ENCODE measurements at regions of chr3 and their contacts with region 1.

Region 1: GRCh38 chr3:184777336-184778004 is 34.5 kb upstream of the VPS8 start:
- DNase-seq: peak; percentile 98
- H3K4me3 ChIP-seq: no peak overlapping the region
- H3K27ac ChIP-seq: no peak overlapping the region
- H3K4me1 ChIP-seq: peaks cover 0 to 16% (median 9%) of the 10 kb centered on the region in 4 donors
- H3K27me3 ChIP-seq: peaks cover 0 to 28% (median 0%) of the 10 kb centered on the region in 4 donors
- CTCF ChIP-seq: peak; percentile 85 to 92 (median 87)
- EP300 ChIP-seq: no peak
- POLR2A ChIP-seq: no peak

Region 2: GRCh38 chr3:184561061-184561912 is 216.2 kb before region 1 on chr3 and contains the start of gene EPHB3:
- intact Hi-C with region 1: loop called (anchors 1 kb)
- DNase-seq: peak; percentile 100
- H3K4me3 ChIP-seq: peak within 1 kb of the TSS; percentile 77 to 82 (median 79)
- H3K27ac ChIP-seq: peak within 1 kb of the TSS; percentile 73 to 89 (median 84)
- H3K4me1 ChIP-seq: peaks cover 18 to 55% (median 52%) of the 10 kb centered on the region in 4 donors
- H3K27me3 ChIP-seq: no peaks in the 10 kb centered on the region
- CTCF ChIP-seq: peak; percentile 98 to 99 (median 98)
- EP300 ChIP-seq: no peak
- POLR2A ChIP-seq: peak; percentile 54
- total RNA-seq, gene EPHB3: 1.5 to 6.1 (median 3.5) TPM

Region 3: GRCh38 chr3:184582646-184583577 is 194.6 kb before region 1 on chr3:
- intact Hi-C with region 1: no loop called
- DNase-seq: no peak
- H3K4me3 ChIP-seq: peak overlapping the region; percentile 66 to 75 (median 72)
- H3K27ac ChIP-seq: peak overlapping the region; percentile 78 to 84 (median 80)
- H3K4me1 ChIP-seq: peaks cover 13 to 35% (median 30%) of the 10 kb centered on the region in 4 donors
- H3K27me3 ChIP-seq: no peaks in the 10 kb centered on the region
- CTCF ChIP-seq: no peak
- EP300 ChIP-seq: no peak
- POLR2A ChIP-seq: no peak

Region 4: DNA sequence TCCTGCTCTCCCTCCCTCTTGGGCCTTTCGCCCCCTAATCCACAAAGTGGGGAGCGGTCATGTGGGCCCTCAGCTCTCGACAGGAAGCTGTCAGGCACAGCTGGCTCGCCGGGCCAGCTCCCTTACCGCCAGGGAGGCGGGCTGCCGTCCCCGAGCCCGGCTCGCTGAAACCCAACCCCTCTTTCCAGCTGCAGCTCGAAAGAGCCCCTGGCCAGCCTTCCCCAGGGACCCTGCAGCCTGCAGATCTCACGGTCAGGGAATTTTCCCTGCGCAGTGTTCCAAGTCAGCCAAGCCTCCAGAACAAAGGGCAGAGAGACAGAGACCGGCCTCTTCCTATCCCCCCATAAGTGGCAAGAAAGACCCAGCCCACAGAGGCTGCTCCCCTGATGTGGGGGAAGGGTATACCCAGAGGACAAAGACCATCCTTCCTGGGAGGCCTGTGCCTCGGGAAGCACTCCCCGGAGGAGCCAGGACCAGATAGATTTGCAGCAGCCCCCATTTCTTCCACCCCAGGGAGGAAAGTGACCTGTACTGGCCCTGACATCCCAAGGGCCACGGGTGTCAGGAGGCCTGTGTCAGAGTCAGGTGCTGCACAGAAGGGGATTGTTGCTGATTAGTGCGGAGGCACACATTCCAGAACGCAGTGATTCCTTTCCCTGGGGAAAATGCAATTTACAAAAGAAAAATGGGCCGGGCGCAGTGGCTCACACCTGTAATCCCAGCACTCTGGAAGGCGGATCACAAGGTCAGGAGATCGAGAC is 98.2 kb before region 1 on chr3:
- intact Hi-C with region 1: no loop called
- DNase-seq: no peak
- H3K4me3 ChIP-seq: peak overlapping the region in 2 of 4 donors; percentile 6 to 12
- H3K27ac ChIP-seq: peak overlapping the region in 1 of 4 donors; percentile 23
- H3K4me1 ChIP-seq: peaks cover 7 to 26% (median 24%) of the 10 kb centered on the region in 4 donors
- H3K27me3 ChIP-seq: no peaks in the 10 kb centered on the region
- CTCF ChIP-seq: no peak
- EP300 ChIP-seq: no peak
- POLR2A ChIP-seq: no peak

Region 5: DNA sequence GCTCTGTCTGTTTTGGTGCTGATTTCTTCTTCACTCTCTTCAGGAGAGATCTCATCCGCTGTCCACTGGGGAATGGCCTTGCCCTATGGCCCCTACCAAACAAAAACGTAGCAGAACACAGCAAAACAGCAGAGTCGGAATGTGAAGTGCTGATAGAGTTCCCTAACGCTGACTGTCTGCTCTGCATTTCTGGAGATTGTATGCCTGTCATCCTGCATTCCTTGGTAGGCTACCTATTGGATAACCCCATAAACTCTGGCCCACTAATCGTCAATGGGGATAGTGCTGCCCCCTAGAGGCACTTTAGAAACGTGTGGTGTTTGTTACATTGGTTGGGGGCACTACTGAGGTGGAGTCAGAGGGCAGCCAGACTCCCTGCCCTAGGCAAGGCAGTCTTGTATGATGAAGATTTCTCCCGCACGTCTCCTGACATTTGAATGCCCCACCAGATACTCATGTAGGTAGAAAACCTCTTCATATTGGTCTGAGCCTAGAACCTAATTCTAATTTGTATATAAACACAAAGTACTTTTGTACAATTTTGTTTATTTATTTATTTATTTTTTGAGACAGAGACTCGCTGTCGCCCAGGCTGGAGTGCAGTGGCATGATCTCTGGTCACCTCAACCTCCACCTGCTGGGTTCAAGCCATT is 50.0 kb before region 1 on chr3:
- intact Hi-C with region 1: loop called (anchors 5 kb)
- DNase-seq: no peak
- H3K4me3 ChIP-seq: no peak overlapping the region
- H3K27ac ChIP-seq: no peak overlapping the region
- H3K4me1 ChIP-seq: peaks cover 0 to 7% (median 2%) of the 10 kb centered on the region in 4 donors
- H3K27me3 ChIP-seq: no peaks in the 10 kb centered on the region
- CTCF ChIP-seq: peak; percentile 69 to 72 (median 70)
- EP300 ChIP-seq: no peak
- POLR2A ChIP-seq: no peak

Measured in esophagus muscularis mucosa (tissue), 4 donors.